Caco-2 (cell line): ENCODE measurements at regions of chr7 and their contacts with region 1.

Region 1: GRCh38 chr7:81159387-81159786 is 240.5 kb upstream of the SEMA3C start:
- DNase-seq: no peak
- H3K4me3 ChIP-seq: no peak overlapping the region
- H3K4me3 Mint-ChIP-seq: no peak overlapping the region
- H3K27ac Mint-ChIP-seq: no peak overlapping the region
- H3K4me1 ChIP-seq: peaks cover 42% of the 10 kb centered on the region
- H3K4me1 Mint-ChIP-seq: peaks cover 50% of the 10 kb centered on the region
- H3K27me3 ChIP-seq: no peaks in the 10 kb centered on the region
- H3K27me3 Mint-ChIP-seq: no peaks in the 10 kb centered on the region
- CTCF ChIP-seq: no peak

Region 2: DNA sequence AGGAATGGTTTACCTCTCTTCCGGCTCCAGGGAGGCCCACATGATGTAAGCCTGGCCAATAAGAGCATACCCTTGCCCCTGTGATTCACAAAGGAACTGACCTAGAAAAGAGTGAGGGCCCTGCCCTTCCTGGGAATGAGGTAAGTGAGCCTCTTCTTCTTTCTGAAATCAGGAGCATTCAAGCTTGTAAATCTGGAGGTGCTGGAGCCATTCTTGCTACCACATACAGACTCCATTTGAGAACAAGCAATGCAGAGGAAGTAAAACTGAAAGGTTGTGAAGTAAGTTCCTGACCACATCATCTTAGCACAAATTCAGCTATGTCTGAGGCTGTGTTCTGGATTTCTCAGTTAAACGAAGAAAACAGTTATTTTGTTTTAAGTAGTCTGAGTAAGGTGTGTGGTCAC is 388.7 kb before region 1 on chr7:
- CTCF ChIA-PET with region 1: no interaction called
- POLR2A ChIA-PET with region 1: no interaction called
- intact Hi-C with region 1: loop called (anchors 5 kb)
- DNase-seq: peak; percentile 27 to 53
- H3K4me3 ChIP-seq: no peak overlapping the region
- H3K4me3 Mint-ChIP-seq: peak overlapping the region; percentile 23
- H3K27ac Mint-ChIP-seq: peak overlapping the region; percentile 62
- H3K4me1 ChIP-seq: peaks cover 19% of the 10 kb centered on the region
- H3K4me1 Mint-ChIP-seq: peaks cover 26% of the 10 kb centered on the region
- H3K27me3 ChIP-seq: no peaks in the 10 kb centered on the region
- H3K27me3 Mint-ChIP-seq: no peaks in the 10 kb centered on the region
- CTCF ChIP-seq: no peak

Region 3: DNA sequence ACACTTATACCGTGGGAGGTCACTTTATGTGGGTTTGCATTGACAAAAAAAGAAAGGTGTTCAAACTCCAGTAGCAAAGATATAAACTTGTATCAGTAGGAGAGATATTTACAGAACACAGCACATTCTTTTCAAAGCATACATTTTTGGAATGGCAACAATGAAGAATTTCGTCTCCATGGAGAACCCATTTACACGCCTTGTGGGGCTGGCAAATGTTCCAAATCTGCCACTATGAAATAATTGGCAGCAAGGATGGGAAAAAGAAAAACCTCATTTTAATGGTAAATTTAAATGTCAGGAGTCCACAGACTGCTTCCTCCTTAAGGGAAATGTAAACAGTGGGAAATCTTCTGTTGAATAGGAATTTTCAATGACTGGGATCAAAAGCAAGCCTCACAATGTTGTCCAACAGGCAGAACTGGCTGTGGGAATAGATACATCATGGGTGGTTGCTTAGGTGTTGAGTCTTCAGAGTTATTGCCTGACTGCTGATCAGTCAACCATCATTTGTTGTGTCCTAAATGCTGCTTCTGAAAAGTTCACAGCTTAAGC is 16.0 kb after region 1 on chr7:
- CTCF ChIA-PET with region 1: no interaction called
- POLR2A ChIA-PET with region 1: interaction called, 4 read pairs
- intact Hi-C with region 1: loop called (anchors 1 kb)
- DNase-seq: peak; percentile 74 to 78
- H3K4me3 ChIP-seq: no peak overlapping the region
- H3K4me3 Mint-ChIP-seq: peak overlapping the region; percentile 47
- H3K27ac Mint-ChIP-seq: peak overlapping the region; percentile 93
- H3K4me1 ChIP-seq: peaks cover 32% of the 10 kb centered on the region
- H3K4me1 Mint-ChIP-seq: peaks cover 17% of the 10 kb centered on the region
- H3K27me3 ChIP-seq: no peaks in the 10 kb centered on the region
- H3K27me3 Mint-ChIP-seq: no peaks in the 10 kb centered on the region
- CTCF ChIP-seq: no peak

Region 4: GRCh38 chr7:81298951-81299669 is 139.7 kb after region 1 on chr7:
- CTCF ChIA-PET with region 1: no interaction called
- POLR2A ChIA-PET with region 1: no interaction called
- intact Hi-C with region 1: loop called (anchors 5 kb)
- DNase-seq: no peak
- H3K4me3 ChIP-seq: no peak overlapping the region
- H3K4me3 Mint-ChIP-seq: no peak overlapping the region
- H3K27ac Mint-ChIP-seq: no peak overlapping the region
- H3K4me1 ChIP-seq: peaks cover 21% of the 10 kb centered on the region
- H3K4me1 Mint-ChIP-seq: peaks cover 16% of the 10 kb centered on the region
- H3K27me3 ChIP-seq: no peaks in the 10 kb centered on the region
- H3K27me3 Mint-ChIP-seq: no peaks in the 10 kb centered on the region
- CTCF ChIP-seq: no peak

Region 5: DNA sequence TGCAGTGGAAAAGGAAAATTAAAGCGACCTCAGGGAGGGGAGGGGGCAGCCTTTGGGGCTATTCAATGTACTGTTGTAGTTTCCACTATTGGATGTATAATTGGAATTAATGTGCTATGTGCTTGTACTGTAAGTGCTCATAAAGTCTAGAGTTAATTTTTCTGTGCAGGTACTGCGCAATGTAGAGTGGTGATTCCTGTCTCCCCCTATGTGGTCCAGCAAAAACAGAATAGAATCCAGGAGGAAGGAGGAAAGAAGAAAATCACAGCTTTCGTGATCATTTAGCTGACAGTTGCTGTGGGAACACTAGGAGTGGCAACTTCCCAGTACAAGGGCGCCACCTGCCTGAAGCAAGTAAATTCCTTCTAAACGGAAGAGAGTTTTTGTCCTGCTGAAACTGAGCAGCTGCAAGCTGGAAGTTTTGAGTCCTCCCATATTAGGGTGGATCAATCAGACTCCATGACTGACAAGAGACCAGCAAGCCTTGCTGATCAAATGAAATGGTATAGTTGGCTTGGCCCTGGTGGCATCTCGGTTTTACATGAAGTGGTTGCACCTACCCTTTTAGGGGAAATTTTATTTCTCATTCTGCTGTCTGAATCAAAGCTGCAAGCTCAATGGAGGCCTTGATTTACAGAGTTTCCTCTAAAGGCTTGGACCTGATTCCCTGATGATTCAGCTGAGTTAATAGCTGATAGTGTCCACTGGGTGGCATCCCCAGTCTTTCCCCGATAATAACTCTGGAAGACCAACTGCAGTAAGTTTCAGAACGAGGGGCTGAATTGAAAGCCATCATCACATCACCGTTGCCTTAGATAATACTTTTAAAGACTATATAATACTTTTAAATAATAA is 310.7 kb after region 1 on chr7:
- CTCF ChIA-PET with region 1: interaction called, 15 read pairs
- POLR2A ChIA-PET with region 1: no interaction called
- intact Hi-C with region 1: no loop called
- DNase-seq: peak; percentile 77
- H3K4me3 ChIP-seq: no peak overlapping the region
- H3K4me3 Mint-ChIP-seq: no peak overlapping the region
- H3K27ac Mint-ChIP-seq: no peak overlapping the region
- H3K4me1 ChIP-seq: peaks cover 11% of the 10 kb centered on the region
- H3K4me1 Mint-ChIP-seq: peaks cover 26% of the 10 kb centered on the region
- H3K27me3 ChIP-seq: no peaks in the 10 kb centered on the region
- H3K27me3 Mint-ChIP-seq: no peaks in the 10 kb centered on the region
- CTCF ChIP-seq: peak; percentile 77 to 79